CD4-positive, alpha-beta T cell (primary cell): ENCODE measurements at regions of chr2 and their contacts with region 1.

Region 1: GRCh38 chr2:148667113-148667836 is 22.7 kb downstream of the EPC2 start:
- DNase-seq: no peak
- ATAC-seq: no peak
- H3K4me3 ChIP-seq: no peak overlapping the region
- H3K4me3 Mint-ChIP-seq: peak overlapping the region; percentile 75
- H3K27ac ChIP-seq: no peak overlapping the region
- H3K27ac Mint-ChIP-seq: peak overlapping the region; percentile 43
- H3K4me1 ChIP-seq: peaks cover 23% of the 10 kb centered on the region
- H3K4me1 Mint-ChIP-seq: peaks cover 83% of the 10 kb centered on the region
- H3K27me3 ChIP-seq: no peaks in the 10 kb centered on the region
- H3K27me3 Mint-ChIP-seq: no peaks in the 10 kb centered on the region
- CTCF ChIP-seq: no peak

Region 2: DNA sequence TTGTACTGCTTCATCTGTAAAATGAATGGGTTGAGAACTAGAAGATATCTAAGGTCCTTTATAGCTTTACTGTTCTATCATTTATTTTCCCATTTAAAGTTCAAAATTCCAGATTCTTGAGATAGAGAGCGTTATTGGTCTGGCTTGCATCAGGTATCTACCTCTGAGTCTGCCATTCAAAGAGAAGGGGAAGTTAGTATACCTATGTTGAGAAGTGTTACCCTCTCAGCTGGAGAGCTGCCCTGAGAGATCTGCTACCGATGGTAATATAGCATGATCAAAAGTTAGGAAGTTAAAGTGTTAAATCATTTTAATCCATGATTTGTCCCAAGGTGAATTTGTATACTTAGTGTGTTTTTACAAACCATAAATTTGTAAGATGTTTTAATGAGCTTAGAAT is 15.3 kb before region 1 on chr2:
- CTCF ChIA-PET with region 1: no interaction called
- POLR2A ChIA-PET with region 1: interaction called, 3 read pairs
- intact Hi-C with region 1: loop called in 1 of 2 experiments (anchors 2 kb)
- DNase-seq: no peak
- ATAC-seq: no peak
- H3K4me3 ChIP-seq: no peak overlapping the region
- H3K4me3 Mint-ChIP-seq: peak overlapping the region; percentile 64
- H3K27ac ChIP-seq: no peak overlapping the region
- H3K27ac Mint-ChIP-seq: peak overlapping the region; percentile 25
- H3K4me1 ChIP-seq: peaks cover 29% of the 10 kb centered on the region
- H3K4me1 Mint-ChIP-seq: peaks cover 90% of the 10 kb centered on the region
- H3K27me3 ChIP-seq: no peaks in the 10 kb centered on the region
- H3K27me3 Mint-ChIP-seq: no peaks in the 10 kb centered on the region
- CTCF ChIP-seq: no peak

Region 3: GRCh38 chr2:148702475-148702874 is 35.2 kb after region 1 on chr2:
- CTCF ChIA-PET with region 1: no interaction called
- POLR2A ChIA-PET with region 1: no interaction called
- intact Hi-C with region 1: loop called in 1 of 2 experiments (anchors 5 kb)
- DNase-seq: no peak
- ATAC-seq: no peak
- H3K4me3 ChIP-seq: no peak overlapping the region
- H3K4me3 Mint-ChIP-seq: no peak overlapping the region
- H3K27ac ChIP-seq: no peak overlapping the region
- H3K27ac Mint-ChIP-seq: no peak overlapping the region
- H3K4me1 ChIP-seq: peaks cover 3% of the 10 kb centered on the region
- H3K4me1 Mint-ChIP-seq: peaks cover 40% of the 10 kb centered on the region
- H3K27me3 ChIP-seq: no peaks in the 10 kb centered on the region
- H3K27me3 Mint-ChIP-seq: no peaks in the 10 kb centered on the region
- CTCF ChIP-seq: no peak